Gastrocnemius medialis (tissue), 4 donors: ENCODE measurements at regions of chr22 and their contacts with region 1.

Region 1: DNA sequence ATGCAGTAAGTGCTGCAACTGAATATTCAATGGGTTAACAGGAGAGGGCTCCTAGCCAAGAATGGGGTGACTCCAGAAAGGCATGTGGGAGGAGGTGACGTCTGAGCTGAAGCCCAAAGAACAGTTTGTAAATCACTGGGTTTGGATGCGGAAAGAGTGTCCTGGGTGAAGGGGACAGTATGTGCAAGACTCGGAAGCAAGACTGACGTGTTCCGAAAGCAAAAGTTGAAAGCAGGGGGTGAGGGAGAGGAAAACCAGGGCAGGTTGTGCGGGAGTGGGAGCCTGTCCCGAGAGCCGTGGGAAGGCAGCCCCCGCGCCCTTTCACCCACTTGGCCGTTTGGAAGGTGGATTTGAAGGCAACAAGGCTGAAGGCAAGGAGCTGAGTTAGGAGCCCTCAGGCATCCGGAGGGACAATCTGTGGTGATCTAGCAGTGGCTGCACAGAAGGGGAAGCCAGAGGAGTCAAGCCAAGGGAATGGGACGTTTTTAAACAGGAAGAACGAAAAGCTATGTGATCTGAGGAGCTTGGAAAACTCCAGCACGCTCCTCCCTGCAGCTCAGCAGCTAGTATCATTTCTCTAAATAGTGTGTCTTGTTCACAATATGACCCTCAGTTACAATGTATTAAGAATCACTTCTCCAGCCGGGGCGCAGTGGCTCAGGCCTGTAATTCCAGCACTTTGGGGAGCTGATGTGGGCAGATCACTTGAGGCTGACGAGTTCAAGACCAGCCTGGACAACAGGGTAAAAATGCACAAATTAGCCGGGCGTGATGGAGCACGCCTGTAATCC is 7.7 kb downstream of the SLC25A18 start:
- DNase-seq: peak; percentile 92 to 95
- ATAC-seq: peak; percentile 93 to 95
- H3K4me3 ChIP-seq: peak overlapping the region; percentile 30 to 47 (median 40)
- H3K27ac ChIP-seq: peak overlapping the region; percentile 87 to 98 (median 96)
- H3K4me1 ChIP-seq: peaks cover 27 to 31% of the 10 kb centered on the region in 2 donors
- H3K27me3 ChIP-seq: no peaks in the 10 kb centered on the region
- CTCF ChIP-seq: no peak
- POLR2A ChIP-seq: peak; percentile 76 to 79

Region 2: GRCh38 chr22:17628304-17629166 is 57.5 kb after region 1 on chr22 and contains the start of gene ATP6V1E1:
- in situ Hi-C with region 1: loop called in 1 of 4 experiments (anchors 10 kb)
- intact Hi-C with region 1: loop called (anchors 5 kb)
- DNase-seq: peak; percentile 97 to 98
- ATAC-seq: peak; percentile 96 to 98
- H3K4me3 ChIP-seq: peak within 1 kb of the TSS; percentile 90 to 100 (median 94)
- H3K27ac ChIP-seq: peak within 1 kb of the TSS; percentile 94 to 99 (median 98)
- H3K4me1 ChIP-seq: peaks cover 17 to 27% of the 10 kb centered on the region in 2 donors
- H3K27me3 ChIP-seq: no peaks in the 10 kb centered on the region
- CTCF ChIP-seq: no peak
- POLR2A ChIP-seq: peak; percentile 90 to 93
- total RNA-seq, gene ATP6V1E1: 243 to 279 (median 250) TPM

Region 3: DNA sequence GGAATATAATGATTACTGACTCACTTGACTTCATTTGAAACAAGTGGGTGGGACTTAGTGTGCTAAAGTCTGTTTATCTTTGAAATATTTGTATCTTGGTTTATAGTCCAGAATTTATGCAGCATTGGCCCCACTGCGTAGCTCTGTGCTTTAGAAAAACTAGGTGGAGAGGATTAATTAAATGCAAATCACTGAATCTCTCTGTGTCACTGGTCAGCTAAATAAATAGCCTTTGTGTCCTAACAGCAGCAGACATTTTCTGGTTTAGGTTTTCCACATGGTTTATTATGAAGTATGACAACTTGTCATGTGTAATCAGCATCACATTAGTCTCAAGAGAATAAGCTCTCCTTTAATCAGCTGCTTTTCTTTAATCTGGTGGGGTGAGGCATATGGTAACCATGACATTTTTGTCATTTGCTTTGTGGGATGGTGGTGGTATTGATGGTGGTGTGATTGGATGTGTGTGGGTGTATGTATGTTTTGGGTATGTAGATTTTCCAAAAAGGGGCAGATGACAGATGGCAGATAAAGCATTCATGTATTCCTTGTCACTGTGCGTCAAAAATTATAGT is 101.5 kb after region 1 on chr22:
- in situ Hi-C with region 1: no loop called
- intact Hi-C with region 1: loop called (anchors 5 kb)
- DNase-seq: no peak
- ATAC-seq: peak; percentile 35 to 50
- H3K4me3 ChIP-seq: no peak overlapping the region
- H3K27ac ChIP-seq: peak overlapping the region; percentile 83 to 94 (median 88)
- H3K4me1 ChIP-seq: peaks cover 13 to 36% of the 10 kb centered on the region in 2 donors
- H3K27me3 ChIP-seq: no peaks in the 10 kb centered on the region
- CTCF ChIP-seq: no peak
- POLR2A ChIP-seq: no peak